ENCODE measurements at regions of chr12 and their contacts with region 1.

Region 1: GRCh38 chr12:124636138-124636978 is 68.9 kb upstream of the NCOR2 start:
- DNase-seq: peak; percentile 89
- ATAC-seq: peak; percentile 25
- H3K4me3 ChIP-seq: no peak overlapping the region
- H3K27ac ChIP-seq: peak overlapping the region; percentile 56
- H3K4me1 ChIP-seq: peaks cover 46% of the 10 kb centered on the region
- H3K27me3 ChIP-seq: no peaks in the 10 kb centered on the region
- CTCF ChIP-seq: no peak

Region 2: DNA sequence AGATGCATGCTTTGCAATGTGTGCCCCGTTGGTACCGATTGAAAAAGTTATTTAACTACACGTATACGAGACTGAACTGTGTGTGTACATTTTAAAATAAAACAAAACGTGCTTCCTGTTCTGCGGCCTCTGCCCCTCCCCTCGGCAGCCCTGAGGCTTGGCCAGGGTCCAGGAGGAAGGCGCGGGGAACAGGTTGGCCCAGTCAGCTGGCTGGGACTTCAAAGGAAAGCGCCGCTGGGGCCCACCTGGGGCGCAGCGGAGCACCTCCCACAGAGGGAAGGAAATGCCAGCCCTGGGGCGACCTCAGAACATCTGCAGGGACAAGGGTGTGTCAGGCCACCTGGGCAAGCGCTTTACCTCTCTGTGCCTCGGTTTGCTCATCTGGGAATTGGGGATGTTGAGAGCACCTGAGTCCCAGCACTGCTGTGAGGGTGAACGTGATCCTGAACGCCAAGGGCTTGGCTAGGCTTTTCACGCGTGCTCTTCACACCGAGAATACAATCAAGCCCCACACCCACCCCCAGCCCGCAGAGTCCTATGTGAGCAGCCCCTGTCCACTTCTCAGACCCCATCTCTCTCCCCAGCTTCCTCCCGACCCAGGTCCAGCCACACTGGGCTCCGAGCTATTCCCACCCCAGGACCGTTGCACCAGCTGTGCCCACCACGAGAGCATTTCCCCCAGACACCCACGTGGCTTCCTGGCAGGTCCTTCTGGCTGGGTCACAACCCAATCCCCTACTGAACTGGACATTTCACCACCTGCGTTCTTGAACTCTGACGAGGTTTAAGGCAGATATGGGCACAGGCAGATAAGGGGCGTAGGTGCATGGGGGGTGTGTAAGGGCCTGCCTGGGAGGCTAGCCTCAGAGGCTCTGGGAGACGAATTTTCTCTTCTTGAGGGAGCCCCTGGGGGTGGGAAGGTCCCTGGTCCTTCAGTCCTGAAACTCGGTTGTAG is 27.0 kb before region 1 on chr12:
- CTCF ChIA-PET with region 1: no interaction called
- POLR2A ChIA-PET with region 1: no interaction called
- intact Hi-C with region 1: loop called (anchors 2 kb)
- DNase-seq: peak; percentile 96
- ATAC-seq: peak; percentile 71
- H3K4me3 ChIP-seq: peak overlapping the region; percentile 55
- H3K27ac ChIP-seq: peak overlapping the region; percentile 71
- H3K4me1 ChIP-seq: peaks cover 30% of the 10 kb centered on the region
- H3K27me3 ChIP-seq: no peaks in the 10 kb centered on the region
- CTCF ChIP-seq: no peak